ENCODE measurements at regions of chr1 and their contacts with region 1.

Region 1: DNA sequence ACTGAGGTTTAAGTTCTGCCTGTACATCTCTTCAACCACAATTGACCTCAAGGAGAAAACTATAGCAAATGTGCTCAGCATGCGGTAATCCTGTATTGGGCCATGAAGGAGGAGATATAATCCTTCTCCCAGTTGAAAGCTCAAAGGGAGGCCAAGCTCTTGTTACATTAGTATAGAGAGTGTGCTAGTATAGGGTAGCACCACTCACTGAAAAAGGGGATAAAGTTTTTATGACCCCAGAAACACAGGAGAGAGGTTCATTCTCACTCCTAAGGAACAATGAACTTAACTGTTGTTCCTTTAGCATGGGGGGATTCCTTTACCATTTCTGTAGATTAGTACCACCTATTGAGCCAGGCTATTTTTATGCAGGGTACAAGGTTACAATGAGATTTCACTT is 267.7 kb downstream of the LRRIQ3 start:
- DNase-seq: no peak
- ATAC-seq: no peak

Region 2: DNA sequence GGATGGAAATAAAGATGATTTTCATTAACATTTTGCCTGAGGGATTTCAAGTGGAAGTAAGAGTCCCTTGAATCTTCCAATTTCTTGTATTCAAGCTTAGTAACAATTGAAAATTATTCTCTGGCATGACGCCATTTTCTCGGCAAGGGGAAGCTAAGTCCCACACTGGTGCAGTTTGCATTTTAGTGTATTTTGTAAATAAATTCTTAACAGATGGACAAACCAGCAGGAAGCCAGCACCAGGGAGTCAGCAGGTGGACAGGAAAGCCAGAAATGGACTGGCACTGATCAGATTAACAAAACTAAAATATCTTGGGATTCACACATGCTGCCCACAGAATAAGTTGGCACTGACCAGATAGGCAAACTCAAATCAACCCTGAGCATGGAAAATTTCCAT is 43.6 kb before region 1 on chr1:
- intact Hi-C with region 1: loop called in 1 of 2 experiments (anchors 5 kb)
- DNase-seq: no peak
- ATAC-seq: no peak